Activated B cell treated with CpG ODN at 0.5 μM for 24 hours (primary cell): ENCODE measurements at regions of chr14 and their contacts with region 1.

Region 1: DNA sequence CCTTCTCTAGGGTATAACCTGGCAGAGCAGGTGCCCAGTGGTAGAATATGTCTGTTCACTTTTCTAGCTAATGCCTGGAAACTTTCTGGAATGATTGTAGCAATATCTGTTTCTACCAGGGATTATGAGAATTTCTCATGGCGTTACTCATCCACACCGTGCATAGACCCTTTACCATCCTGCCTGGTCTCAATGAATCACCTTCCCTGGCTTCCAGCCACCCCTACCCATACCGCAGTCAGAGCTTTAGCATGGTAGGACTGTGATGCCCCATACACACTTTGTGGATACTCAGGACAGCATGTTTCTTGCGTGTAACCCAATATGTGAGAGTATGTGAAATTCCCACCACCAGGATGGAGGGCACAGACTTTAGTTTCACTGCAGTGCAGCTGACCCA is 45.4 kb downstream of the TUNAR start:
- DNase-seq: no peak
- ATAC-seq: no peak
- H3K4me3 Mint-ChIP-seq: no peak overlapping the region
- H3K27ac Mint-ChIP-seq: no peak overlapping the region
- H3K4me1 Mint-ChIP-seq: no peaks in the 10 kb centered on the region
- H3K27me3 Mint-ChIP-seq: peaks cover 8% of the 10 kb centered on the region
- CTCF ChIP-seq: no peak

Region 2: DNA sequence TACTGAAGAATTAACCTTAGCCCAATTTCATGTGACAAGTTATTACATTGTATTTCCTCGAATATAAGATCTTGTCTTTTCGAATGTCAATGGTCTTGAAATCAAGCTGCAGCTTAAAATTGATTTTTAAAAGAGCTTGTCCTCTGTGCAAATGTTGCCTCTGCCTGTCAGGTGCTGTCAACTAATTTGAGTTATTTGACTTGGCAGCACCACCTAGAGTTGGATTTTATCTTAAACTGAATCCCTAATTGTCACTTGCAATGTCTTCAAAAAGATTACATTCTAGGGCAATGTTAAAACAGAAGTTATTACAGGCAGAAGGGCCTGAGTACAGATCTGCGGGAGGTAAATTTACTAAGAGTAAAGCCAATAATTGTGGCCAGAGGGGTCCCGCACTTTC is 71.7 kb before region 1 on chr14:
- CTCF ChIA-PET with region 1: no interaction called
- POLR2A ChIA-PET with region 1: no interaction called
- intact Hi-C with region 1: loop called (anchors 10 kb)
- DNase-seq: no peak
- ATAC-seq: no peak
- H3K4me3 Mint-ChIP-seq: no peak overlapping the region
- H3K27ac Mint-ChIP-seq: no peak overlapping the region
- H3K4me1 Mint-ChIP-seq: peaks cover 2% of the 10 kb centered on the region
- H3K27me3 Mint-ChIP-seq: no peaks in the 10 kb centered on the region
- CTCF ChIP-seq: no peak